Mammary epithelial cell (primary cell): ENCODE measurements at regions of chr14 and their contacts with region 1.

Region 1: GRCh38 chr14:61609191-61609843 is 86.0 kb upstream of the HIF1A start:
- DNase-seq: peak; percentile 50
- H3K4me3 ChIP-seq: no peak overlapping the region
- H3K27ac ChIP-seq: no peak overlapping the region
- H3K4me1 ChIP-seq: peaks cover 12% of the 10 kb centered on the region
- H3K27me3 ChIP-seq: no peaks in the 10 kb centered on the region
- CTCF ChIP-seq: no peak

Region 2: DNA sequence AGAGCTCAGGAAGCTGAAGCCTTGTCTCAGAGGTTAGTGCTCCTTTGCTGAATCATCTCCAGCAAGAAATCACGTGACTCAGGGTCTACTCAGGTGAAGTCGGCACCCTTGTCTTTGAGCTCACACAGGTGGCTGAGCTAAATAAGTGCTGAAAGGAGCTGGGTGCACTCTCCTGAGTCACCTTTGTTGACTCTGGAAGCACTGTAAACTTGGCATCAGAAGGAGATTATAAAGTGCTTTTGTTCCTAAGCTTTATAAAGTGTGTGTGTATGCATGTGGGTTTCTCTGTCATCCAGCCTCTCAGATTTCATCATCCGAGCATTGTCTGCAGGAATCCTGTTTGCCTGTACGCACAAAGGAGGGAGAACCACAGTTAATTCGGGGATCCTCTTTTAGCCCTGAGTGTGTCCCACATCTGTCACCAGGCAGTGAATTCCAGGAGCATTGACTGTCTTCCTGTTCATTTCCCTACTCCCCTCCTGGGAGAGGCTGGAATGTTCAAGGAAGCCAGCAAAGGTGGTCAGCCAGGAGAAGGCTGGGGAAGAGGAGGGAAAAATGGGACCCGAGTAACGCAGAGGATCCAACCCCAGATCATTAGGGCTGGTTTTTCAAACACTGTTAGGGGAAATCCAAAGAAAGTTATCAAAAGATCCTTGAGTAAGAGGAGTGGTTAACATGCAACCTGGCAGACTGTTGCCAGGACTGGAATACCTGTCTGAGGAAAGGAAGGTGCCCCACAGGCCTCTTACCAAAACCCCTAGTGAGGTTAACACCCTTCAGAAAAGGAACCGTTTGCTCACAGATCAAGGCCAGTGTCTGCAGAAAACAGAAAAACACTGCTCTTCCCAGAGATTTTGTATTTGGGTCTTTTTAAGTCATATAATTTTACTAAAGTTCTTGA is 71.5 kb before region 1 on chr14:
- CTCF ChIA-PET with region 1: no interaction called
- dilution Hi-C with region 1: loop called (anchors 5 kb)
- in situ Hi-C with region 1: no loop called
- intact Hi-C with region 1: no loop called
- DNase-seq: peak; percentile 100
- H3K4me3 ChIP-seq: no peak overlapping the region
- H3K27ac ChIP-seq: peak overlapping the region; percentile 80
- H3K4me1 ChIP-seq: peaks cover 50% of the 10 kb centered on the region
- H3K27me3 ChIP-seq: no peaks in the 10 kb centered on the region
- CTCF ChIP-seq: no peak